WTC11 (cell line): ENCODE measurements at regions of chr10 and their contacts with region 1.

Region 1: GRCh38 chr10:132591166-132591971 is 53.8 kb downstream of the INPP5A start:
- DNase-seq: peak; percentile 64
- ATAC-seq: peak; percentile 89
- H3K4me3 Mint-ChIP-seq: no peak overlapping the region
- H3K27ac Mint-ChIP-seq: peak overlapping the region; percentile 71
- H3K4me1 Mint-ChIP-seq: peaks cover 13% of the 10 kb centered on the region
- H3K27me3 Mint-ChIP-seq: peaks cover 6% of the 10 kb centered on the region; the same call in 1 of the 2 replicates
- CTCF ChIP-seq: no peak

Region 2: GRCh38 chr10:132518572-132519381 is 72.6 kb before region 1 on chr10:
- CTCF ChIA-PET with region 1: interaction called, 10 read pairs
- POLR2A ChIA-PET with region 1: no interaction called
- DNase-seq: peak; percentile 78
- ATAC-seq: peak; percentile 80
- H3K4me3 Mint-ChIP-seq: peak overlapping the region; percentile 81
- H3K27ac Mint-ChIP-seq: peak overlapping the region; percentile 95
- H3K4me1 Mint-ChIP-seq: peaks cover 32% of the 10 kb centered on the region
- H3K27me3 Mint-ChIP-seq: peaks cover 16% of the 10 kb centered on the region
- CTCF ChIP-seq: no peak

Region 3: GRCh38 chr10:132579027-132579859 is 12.1 kb before region 1 on chr10:
- CTCF ChIA-PET with region 1: interaction called, 11 read pairs
- POLR2A ChIA-PET with region 1: no interaction called
- DNase-seq: no peak
- ATAC-seq: no peak; the same call in 1 of the 2 replicates
- H3K4me3 Mint-ChIP-seq: no peak overlapping the region
- H3K27ac Mint-ChIP-seq: no peak overlapping the region
- H3K4me1 Mint-ChIP-seq: peaks cover 21% of the 10 kb centered on the region
- H3K27me3 Mint-ChIP-seq: no peaks in the 10 kb centered on the region
- CTCF ChIP-seq: no peak

Region 4: DNA sequence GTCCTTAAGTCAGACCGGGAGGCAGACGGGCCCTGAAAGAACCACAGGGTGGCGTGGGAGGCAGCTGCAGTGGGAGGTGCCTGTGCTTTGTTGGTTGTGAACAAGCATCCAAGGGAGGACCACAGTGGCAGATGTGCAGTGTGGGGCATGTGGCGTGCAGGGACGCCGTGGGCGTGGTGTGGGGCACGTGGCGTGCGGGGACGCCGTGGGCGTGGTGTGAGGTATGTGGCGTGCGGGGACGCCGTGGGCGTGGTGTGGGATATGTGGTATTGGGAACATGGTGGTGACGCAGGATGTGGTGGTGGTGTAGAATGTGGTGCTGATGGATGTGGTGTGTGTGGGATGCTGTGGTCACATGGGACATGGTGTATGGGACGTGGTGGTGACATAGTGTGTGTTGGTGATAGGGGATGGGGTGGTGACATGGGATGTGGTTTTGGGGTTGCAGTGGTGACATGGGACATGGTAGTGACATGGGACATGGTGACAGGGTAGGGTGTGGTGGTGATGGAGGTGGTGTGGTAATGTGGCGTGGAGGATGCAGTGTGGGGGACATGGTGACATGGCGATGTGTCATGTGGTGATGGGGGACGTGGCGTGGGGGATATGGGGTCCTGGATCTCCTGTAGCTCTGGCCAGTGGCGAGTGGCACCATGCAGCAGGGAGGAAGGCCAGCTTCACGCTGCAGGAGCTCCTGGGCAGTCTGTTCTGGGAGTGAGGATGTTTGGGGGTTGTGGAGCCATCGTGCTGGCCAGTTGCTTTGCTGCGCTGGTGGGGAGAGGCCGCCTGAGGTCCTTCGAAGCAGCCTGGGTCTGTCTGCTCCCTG is 25.0 kb after region 1 on chr10:
- CTCF ChIA-PET with region 1: no interaction called
- POLR2A ChIA-PET with region 1: no interaction called
- DNase-seq: no peak
- ATAC-seq: no peak
- H3K4me3 Mint-ChIP-seq: no peak overlapping the region
- H3K27ac Mint-ChIP-seq: no peak overlapping the region
- H3K4me1 Mint-ChIP-seq: peaks cover 2% of the 10 kb centered on the region; the same call in 1 of the 2 replicates
- H3K27me3 Mint-ChIP-seq: peaks cover 41% of the 10 kb centered on the region
- CTCF ChIP-seq: no peak

Region 5: GRCh38 chr10:132665946-132666704 is 74.8 kb after region 1 on chr10:
- CTCF ChIA-PET with region 1: no interaction called
- POLR2A ChIA-PET with region 1: no interaction called
- DNase-seq: no peak
- ATAC-seq: no peak
- H3K4me3 Mint-ChIP-seq: no peak overlapping the region
- H3K27ac Mint-ChIP-seq: no peak overlapping the region
- H3K4me1 Mint-ChIP-seq: no peaks in the 10 kb centered on the region
- H3K27me3 Mint-ChIP-seq: no peaks in the 10 kb centered on the region
- CTCF ChIP-seq: no peak